ENCODE measurements at regions of chr10 and their contacts with region 1.

Region 1: GRCh38 chr10:109966961-109967738 is 40.6 kb upstream of the ADD3 start:
- DNase-seq: peak in 1 of 2 experiments; percentile 34
- H3K4me3 ChIP-seq: no peak overlapping the region
- H3K4me3 Mint-ChIP-seq: no peak overlapping the region
- H3K27ac Mint-ChIP-seq: no peak overlapping the region
- H3K4me1 ChIP-seq: peaks cover 28% of the 10 kb centered on the region
- H3K4me1 Mint-ChIP-seq: peaks cover 12% of the 10 kb centered on the region
- H3K27me3 ChIP-seq: no peaks in the 10 kb centered on the region
- H3K27me3 Mint-ChIP-seq: no peaks in the 10 kb centered on the region
- CTCF ChIP-seq: no peak

Region 2: DNA sequence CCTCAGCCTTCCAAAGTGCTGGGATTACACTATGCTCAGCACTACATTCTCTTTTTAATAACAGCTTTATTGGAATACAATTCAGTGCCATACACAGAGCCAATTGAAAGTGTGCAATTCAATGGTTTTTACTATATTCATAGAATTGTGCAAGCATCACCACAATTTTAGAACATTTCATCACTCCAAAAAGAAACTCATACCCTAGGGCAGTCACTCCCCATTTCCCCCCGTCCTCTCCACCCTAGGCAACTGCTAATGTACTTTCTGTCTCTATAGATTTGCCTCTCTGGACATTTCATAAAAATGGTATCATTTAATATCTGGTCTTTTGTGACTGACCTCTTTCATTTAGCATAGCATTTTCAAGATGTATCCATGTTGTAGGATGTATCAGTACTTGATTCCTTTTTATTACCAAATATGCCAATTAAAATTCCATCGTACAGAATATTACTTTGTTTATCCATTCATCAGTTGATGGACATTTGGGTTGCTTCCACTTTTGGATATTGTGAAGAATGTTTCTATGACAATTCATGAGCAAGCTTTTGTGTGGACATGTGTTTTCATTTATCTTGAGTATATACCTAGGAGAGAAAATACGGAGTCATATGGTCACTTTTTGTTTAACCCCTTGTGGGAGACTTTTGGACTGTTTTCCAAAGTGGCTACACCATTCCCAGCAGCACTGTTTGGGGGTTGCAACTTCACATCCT is 37.5 kb before region 1 on chr10:
- CTCF ChIA-PET with region 1: no interaction called
- POLR2A ChIA-PET with region 1: no interaction called
- intact Hi-C with region 1: loop called (anchors 5 kb)
- DNase-seq: no peak
- H3K4me3 ChIP-seq: no peak overlapping the region
- H3K4me3 Mint-ChIP-seq: no peak overlapping the region
- H3K27ac Mint-ChIP-seq: no peak overlapping the region
- H3K4me1 ChIP-seq: peaks cover 12% of the 10 kb centered on the region
- H3K4me1 Mint-ChIP-seq: peaks cover 7% of the 10 kb centered on the region
- H3K27me3 ChIP-seq: no peaks in the 10 kb centered on the region
- H3K27me3 Mint-ChIP-seq: no peaks in the 10 kb centered on the region
- CTCF ChIP-seq: no peak

Region 3: DNA sequence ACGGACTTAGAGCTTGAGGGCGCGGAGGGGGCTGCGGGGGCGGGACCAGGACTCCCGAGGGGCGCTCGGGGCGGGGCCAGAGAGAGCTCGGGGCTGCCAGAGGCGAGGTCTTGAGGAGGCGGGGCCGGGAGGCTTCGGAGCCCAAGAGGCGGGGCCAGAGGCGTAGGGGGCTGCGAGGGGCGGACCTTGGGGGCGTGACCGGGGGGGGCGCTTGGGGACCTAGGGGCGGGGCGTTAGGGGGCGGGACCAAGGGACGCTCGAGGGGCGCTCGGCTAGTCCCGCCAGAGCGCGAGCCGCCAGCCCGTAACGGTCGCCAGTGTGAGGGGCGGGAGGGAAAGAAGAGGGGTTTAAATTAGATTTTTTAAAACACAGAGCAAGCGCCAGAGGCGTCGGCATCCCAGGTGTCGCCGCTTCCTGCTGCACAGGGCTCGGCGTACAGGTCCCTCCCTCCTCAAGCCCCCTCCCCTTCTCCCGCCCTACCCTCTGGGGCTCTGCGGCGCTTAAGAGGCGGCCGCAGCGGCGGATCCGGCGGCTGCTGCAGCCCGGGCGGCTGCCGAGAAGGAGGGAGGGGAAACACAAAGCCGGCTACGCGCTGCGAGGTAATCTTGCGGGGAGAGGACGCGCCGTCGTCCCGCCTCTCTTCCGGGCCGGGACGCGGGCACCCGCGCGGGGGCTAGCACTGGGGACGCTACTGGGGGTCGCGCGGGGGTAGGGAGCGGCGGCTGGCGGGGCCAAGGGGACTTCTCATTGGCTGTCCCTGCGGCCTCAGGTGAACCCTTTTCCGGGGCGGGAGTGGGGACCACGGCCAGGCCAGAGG is 40.8 kb after region 1 on chr10 and contains the start of gene ADD3:
- CTCF ChIA-PET with region 1: no interaction called
- POLR2A ChIA-PET with region 1: no interaction called
- intact Hi-C with region 1: no loop called
- DNase-seq: peak; percentile 96 to 97
- H3K4me3 ChIP-seq: peak within 1 kb of the TSS; percentile 94
- H3K4me3 Mint-ChIP-seq: no peak within 1 kb of the TSS
- H3K27ac Mint-ChIP-seq: no peak within 1 kb of the TSS
- H3K4me1 ChIP-seq: peaks cover 47% of the 10 kb centered on the region
- H3K4me1 Mint-ChIP-seq: peaks cover 11% of the 10 kb centered on the region
- H3K27me3 ChIP-seq: no peaks in the 10 kb centered on the region
- H3K27me3 Mint-ChIP-seq: no peaks in the 10 kb centered on the region
- CTCF ChIP-seq: no peak
- total RNA-seq, gene ADD3: 236 and 264 TPM in 2 replicates

Measured in Caco-2 (cell line).